AG04450 (cell line): ENCODE measurements at regions of chr12 and their contacts with region 1.

Region 1: DNA sequence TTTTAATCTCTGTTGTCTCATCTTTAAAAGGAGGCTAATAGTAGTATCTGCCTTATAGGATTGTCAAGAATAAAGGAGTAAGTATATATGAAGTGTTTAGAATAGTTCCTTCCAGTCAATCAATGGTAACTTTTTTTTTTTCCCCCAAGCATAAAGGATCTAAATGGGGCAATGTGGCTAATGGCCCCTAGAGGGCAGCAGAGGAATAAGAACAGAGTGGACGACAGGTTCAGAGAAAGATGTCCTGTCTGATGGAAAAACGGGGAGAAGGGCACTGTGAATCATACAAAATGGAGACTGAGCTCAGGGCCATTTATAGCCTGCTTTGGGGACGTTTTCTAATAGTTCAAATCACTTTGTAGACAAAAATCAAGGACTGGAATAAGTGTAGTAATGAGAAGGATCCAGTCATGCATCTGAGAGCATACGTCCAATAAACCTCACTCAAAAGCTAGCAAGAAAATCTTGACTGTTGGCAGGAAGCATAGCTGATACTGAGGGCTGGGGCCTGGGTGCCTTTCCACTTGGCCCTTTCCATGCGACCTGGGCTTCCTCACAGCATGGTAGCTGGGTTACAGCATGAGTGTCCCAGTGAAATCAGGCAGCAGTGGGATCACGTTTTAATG is 51.3 kb downstream of the IFNG-AS1 start:
- DNase-seq: peak; percentile 45
- H3K4me3 ChIP-seq: no peak overlapping the region
- H3K27ac ChIP-seq: no peak overlapping the region
- H3K27me3 ChIP-seq: peaks cover 2% of the 10 kb centered on the region
- CTCF ChIP-seq: peak; percentile 93

Region 2: DNA sequence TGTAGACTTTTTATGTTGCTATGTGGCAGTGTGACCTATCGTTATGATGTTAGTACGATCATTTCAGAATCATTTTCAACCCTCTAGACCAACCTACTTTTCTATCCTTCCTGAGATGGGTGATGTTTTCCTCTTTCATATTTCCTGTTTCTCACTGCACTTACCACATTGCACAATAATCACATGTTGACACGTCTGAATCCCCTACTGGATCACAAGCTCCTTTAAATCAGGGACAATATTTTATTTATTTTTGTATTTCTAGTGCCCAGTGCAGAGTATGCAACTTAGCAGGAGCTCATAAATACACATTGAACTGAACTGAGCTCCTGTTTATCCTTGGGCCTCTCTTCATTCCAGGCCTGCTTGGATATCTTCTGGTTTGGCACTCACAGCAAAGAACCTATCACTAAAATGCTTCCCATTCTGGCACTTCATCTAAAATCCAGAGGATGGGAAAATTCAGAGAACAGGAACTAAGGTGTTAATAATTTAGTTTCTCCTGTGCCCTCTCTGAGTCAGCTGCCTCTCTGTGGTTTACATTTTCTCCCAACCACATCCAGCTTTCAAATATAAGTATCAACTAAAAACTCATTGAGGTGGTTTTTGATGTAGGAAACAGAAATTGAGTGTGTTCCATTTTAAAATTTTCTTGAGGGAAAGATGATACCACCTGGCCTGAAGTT is 461.4 kb before region 1 on chr12:
- CTCF ChIA-PET with region 1: no interaction called
- POLR2A ChIA-PET with region 1: no interaction called
- DNase-seq: no peak
- H3K4me3 ChIP-seq: no peak overlapping the region
- H3K27ac ChIP-seq: no peak overlapping the region
- H3K27me3 ChIP-seq: no peaks in the 10 kb centered on the region
- CTCF ChIP-seq: no peak

Region 3: DNA sequence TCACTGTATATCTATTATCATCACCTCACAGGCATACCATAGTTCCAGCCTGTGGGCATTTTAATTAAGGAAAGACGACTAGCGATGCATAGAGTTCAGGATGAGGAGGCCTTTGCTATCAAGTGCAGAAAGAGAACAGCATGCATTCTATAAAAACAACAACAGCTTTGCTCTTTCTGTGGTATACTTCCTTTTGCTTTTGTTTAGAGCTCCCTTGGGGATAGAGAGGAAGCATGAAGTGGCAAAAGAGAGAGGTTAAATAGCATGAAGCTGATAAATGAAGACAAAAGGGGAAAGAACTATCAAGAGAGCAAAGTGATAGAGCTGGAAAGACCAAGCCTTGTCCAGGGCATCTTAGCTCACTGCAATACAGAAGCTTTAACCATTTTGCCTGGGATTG is 27.9 kb before region 1 on chr12:
- CTCF ChIA-PET with region 1: interaction called, 12 read pairs
- POLR2A ChIA-PET with region 1: no interaction called
- DNase-seq: no peak
- H3K4me3 ChIP-seq: no peak overlapping the region
- H3K27ac ChIP-seq: no peak overlapping the region
- H3K27me3 ChIP-seq: no peaks in the 10 kb centered on the region
- CTCF ChIP-seq: no peak

Region 4: GRCh38 chr12:68020699-68021098 is 19.9 kb before region 1 on chr12:
- CTCF ChIA-PET with region 1: interaction called, 23 read pairs
- POLR2A ChIA-PET with region 1: no interaction called
- DNase-seq: no peak
- H3K4me3 ChIP-seq: no peak overlapping the region
- H3K27ac ChIP-seq: no peak overlapping the region
- H3K27me3 ChIP-seq: no peaks in the 10 kb centered on the region
- CTCF ChIP-seq: no peak

Region 5: GRCh38 chr12:68138480-68138879 is 97.9 kb after region 1 on chr12:
- CTCF ChIA-PET with region 1: no interaction called
- POLR2A ChIA-PET with region 1: no interaction called
- DNase-seq: no peak
- H3K4me3 ChIP-seq: no peak overlapping the region
- H3K27ac ChIP-seq: no peak overlapping the region
- H3K27me3 ChIP-seq: no peaks in the 10 kb centered on the region
- CTCF ChIP-seq: no peak

Region 6: GRCh38 chr12:68158432-68158831 is 117.9 kb after region 1 on chr12:
- CTCF ChIA-PET with region 1: interaction called, 16 read pairs
- POLR2A ChIA-PET with region 1: no interaction called
- DNase-seq: no peak
- H3K4me3 ChIP-seq: no peak overlapping the region
- H3K27ac ChIP-seq: no peak overlapping the region
- H3K27me3 ChIP-seq: no peaks in the 10 kb centered on the region
- CTCF ChIP-seq: peak; percentile 31

Region 7: DNA sequence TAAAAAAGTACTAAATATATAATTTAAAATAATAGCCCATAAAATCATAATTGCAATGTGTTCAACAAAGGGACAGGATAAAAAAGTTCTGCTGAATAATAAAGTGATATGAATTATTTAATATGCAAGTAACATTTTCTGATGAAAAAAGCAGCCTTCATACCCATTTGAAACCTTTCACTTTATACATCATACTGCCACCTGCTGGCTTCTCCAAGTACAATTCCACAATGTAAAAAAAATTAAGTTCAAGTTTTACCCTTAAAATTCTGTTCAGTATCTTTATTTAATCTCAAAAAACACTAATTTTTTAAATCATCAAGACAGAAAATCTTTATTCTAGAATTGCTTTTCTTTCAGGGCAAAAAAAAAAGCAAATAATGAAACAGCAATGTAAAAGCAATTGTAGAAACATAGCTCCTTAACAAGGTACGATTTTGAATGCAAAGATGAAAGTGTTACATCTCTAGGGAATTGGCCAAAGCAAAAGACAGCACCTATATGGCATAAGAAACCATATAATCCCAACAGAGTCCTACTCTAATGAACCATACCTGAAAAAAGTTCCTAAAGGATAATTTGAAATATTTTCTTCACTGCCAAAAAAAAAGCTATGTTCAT is 276.6 kb after region 1 on chr12:
- CTCF ChIA-PET with region 1: interaction called, 27 read pairs
- POLR2A ChIA-PET with region 1: interaction called, 4 read pairs
- DNase-seq: peak; percentile 15
- H3K4me3 ChIP-seq: no peak overlapping the region
- H3K27ac ChIP-seq: no peak overlapping the region
- H3K27me3 ChIP-seq: no peaks in the 10 kb centered on the region
- CTCF ChIP-seq: peak; percentile 61